HepG2 (cell line): ENCODE measurements at regions of chr2 and their contacts with region 1.

Region 1: DNA sequence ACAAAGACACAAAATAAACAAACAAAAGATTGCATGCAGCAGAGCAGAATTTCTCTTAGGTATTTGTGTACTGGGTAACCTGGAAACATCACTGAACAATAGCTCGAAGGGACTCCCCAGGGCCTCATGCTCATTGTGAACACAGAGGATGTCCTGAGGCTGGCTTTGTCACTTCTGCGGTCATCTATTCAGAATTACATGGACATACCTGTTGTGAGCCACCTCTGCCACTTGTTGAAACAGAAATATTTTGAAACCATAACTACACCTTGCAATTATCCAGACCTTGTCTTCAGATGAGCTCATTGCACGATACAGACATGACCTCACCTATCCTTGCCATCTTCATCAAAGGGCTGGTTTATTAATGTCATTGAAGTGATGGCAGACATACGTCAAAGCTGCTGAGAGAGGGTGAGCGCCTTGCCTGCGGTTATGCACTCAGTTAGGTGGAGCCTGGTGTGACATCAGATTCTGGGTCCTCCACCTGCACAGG is 23.5 kb upstream of the CREG2 start:
- DNase-seq: no peak
- ATAC-seq: no peak
- H3K4me3 ChIP-seq: no peak overlapping the region
- H3K27ac ChIP-seq: no peak overlapping the region
- H3K4me1 ChIP-seq: no peaks in the 10 kb centered on the region
- H3K27me3 ChIP-seq: peaks cover 4 to 54% of the 10 kb centered on the region in 2 experiments; a peak in 4 of 5 replicates
- CTCF ChIP-seq: no peak
- EP300 ChIP-seq: no peak
- POLR2A ChIP-seq: no peak
- RAD21 ChIP-seq: no peak

Region 2: GRCh38 chr2:101432411-101433181 is 21.8 kb after region 1 on chr2:
- CTCF ChIA-PET with region 1: no interaction called
- POLR2A ChIA-PET with region 1: no interaction called
- in situ Hi-C with region 1: no loop called
- intact Hi-C with region 1: no loop called
- DNase-seq: no peak
- ATAC-seq: peak; percentile 57
- H3K4me3 ChIP-seq: no peak overlapping the region
- H3K27ac ChIP-seq: no peak overlapping the region
- H3K4me1 ChIP-seq: 0 out of 2 replicates have a peak, but pooled peaks cover 7% of the 10 kb centered on the region
- H3K27me3 ChIP-seq: peaks cover 7 to 77% of the 10 kb centered on the region in 2 experiments
- CTCF ChIP-seq: no peak
- EP300 ChIP-seq: no peak
- POLR2A ChIP-seq: no peak
- RAD21 ChIP-seq: no peak

Region 3: GRCh38 chr2:101463891-101464641 is 53.3 kb after region 1 on chr2:
- CTCF ChIA-PET with region 1: no interaction called
- POLR2A ChIA-PET with region 1: no interaction called
- in situ Hi-C with region 1: no loop called
- intact Hi-C with region 1: no loop called
- DNase-seq: no peak
- ATAC-seq: no peak; the same call in 2 of the 3 replicates
- H3K4me3 ChIP-seq: no peak overlapping the region
- H3K27ac ChIP-seq: no peak overlapping the region
- H3K4me1 ChIP-seq: peaks cover 18% of the 10 kb centered on the region; the same call in 1 of the 2 replicates
- H3K27me3 ChIP-seq: peaks cover 5 to 56% of the 10 kb centered on the region in 2 experiments; a peak in 4 of 5 replicates
- CTCF ChIP-seq: no peak
- EP300 ChIP-seq: no peak
- POLR2A ChIP-seq: no peak
- RAD21 ChIP-seq: no peak

Region 4: GRCh38 chr2:101524806-101525430 is 114.2 kb after region 1 on chr2:
- CTCF ChIA-PET with region 1: no interaction called
- POLR2A ChIA-PET with region 1: no interaction called
- in situ Hi-C with region 1: no loop called
- intact Hi-C with region 1: loop called (anchors 1 kb)
- DNase-seq: peak; percentile 16
- ATAC-seq: no peak
- H3K4me3 ChIP-seq: no peak overlapping the region
- H3K27ac ChIP-seq: no peak overlapping the region
- H3K4me1 ChIP-seq: peaks cover 24% of the 10 kb centered on the region
- H3K27me3 ChIP-seq: peaks cover 0 to 23% of the 10 kb centered on the region in 2 experiments; a peak in 1 of 5 replicates
- CTCF ChIP-seq: no peak
- EP300 ChIP-seq: no peak
- POLR2A ChIP-seq: no peak
- RAD21 ChIP-seq: no peak